Ascending aorta (tissue), 2 donors: ENCODE measurements at regions of chr19 and their contacts with region 1.

Region 1: GRCh38 chr19:47514869-47515588 is at the start of gene NAPA:
- DNase-seq: peak; percentile 100
- H3K4me3 ChIP-seq: peak within 1 kb of the TSS; percentile 84 to 85
- H3K27ac ChIP-seq: peak within 1 kb of the TSS; percentile 92 to 96
- H3K4me1 ChIP-seq: peaks cover 21 to 38% of the 10 kb centered on the region in 2 donors
- H3K27me3 ChIP-seq: no peaks in the 10 kb centered on the region
- CTCF ChIP-seq: no peak
- total RNA-seq, gene NAPA: 102 TPM

Region 2: DNA sequence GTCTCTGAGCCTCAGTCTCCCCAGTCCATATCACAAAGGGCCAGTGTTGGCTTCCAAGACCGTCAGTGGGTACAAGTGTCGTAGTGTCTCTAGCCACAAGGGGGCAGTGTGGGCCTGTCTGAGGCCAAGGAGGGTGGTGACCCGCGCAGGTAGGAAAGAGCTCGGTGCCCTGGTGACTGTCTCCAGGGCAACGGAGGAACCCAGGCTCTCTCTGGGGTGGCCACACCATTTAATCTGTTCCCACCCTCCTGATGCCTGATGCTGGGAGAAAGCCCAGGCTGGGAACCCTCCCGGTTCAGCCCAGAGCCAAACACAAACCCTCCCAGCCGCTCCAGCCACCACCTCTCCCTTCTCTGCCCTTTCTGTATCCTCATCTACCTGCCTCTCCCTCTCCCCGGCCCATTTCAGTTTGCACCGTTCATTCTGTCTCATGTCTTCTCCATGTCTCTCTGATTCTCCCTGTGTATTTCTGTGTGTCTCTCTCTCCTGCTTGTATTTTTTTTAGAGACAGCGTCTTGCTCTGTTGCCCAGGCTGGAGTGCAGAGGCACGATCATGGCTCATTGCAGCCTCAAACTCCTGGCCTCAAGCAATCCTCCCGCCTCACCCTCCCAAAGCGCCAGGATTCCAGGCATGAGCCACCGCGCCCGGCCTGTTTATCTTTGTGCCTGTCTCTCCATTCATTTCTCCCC is 78.2 kb before region 1 on chr19:
- intact Hi-C with region 1: loop called (anchors 1 kb)
- DNase-seq: peak in 1 of 2 donors; percentile 86
- H3K4me3 ChIP-seq: no peak overlapping the region
- H3K27ac ChIP-seq: no peak overlapping the region
- H3K4me1 ChIP-seq: no peaks in the 10 kb centered on the region
- H3K27me3 ChIP-seq: peaks cover 5% of the 10 kb centered on the region
- CTCF ChIP-seq: peak; percentile 81 to 92 (median 92)

Region 3: GRCh38 chr19:47483800-47484690 is 31.0 kb before region 1 on chr19 and contains the start of gene KPTN:
- intact Hi-C with region 1: loop called (anchors 1 kb)
- DNase-seq: peak; percentile 49 to 93
- H3K4me3 ChIP-seq: peak within 1 kb of the TSS; percentile 70 to 75
- H3K27ac ChIP-seq: peak within 1 kb of the TSS; percentile 86 to 93
- H3K4me1 ChIP-seq: peaks cover 0 to 8% of the 10 kb centered on the region in 2 donors
- H3K27me3 ChIP-seq: no peaks in the 10 kb centered on the region
- CTCF ChIP-seq: peak; percentile 82 to 97 (median 87)
- total RNA-seq, gene KPTN: 26.0 TPM

Region 4: DNA sequence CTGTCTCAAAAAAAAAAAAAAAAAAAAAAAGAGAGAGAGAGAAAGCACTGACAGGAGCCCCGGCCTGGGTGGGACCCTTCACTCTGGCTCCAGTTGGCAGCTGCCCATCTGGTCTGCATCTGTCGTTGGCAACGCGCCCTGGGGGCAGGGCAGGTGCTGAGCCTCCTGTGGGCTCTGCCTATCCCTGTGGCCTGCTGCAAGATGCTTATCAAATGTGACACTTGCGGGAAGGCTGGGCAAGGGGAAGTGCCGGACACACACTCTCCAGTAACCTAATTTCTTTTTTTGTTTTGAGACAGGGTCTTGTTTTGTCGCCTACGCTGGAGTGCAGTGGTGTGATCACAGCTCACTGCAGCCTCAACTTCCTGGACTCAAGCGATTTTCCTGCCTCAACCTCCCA is 20.3 kb before region 1 on chr19:
- intact Hi-C with region 1: no loop called
- DNase-seq: no peak
- H3K4me3 ChIP-seq: no peak overlapping the region
- H3K27ac ChIP-seq: no peak overlapping the region
- H3K4me1 ChIP-seq: no peaks in the 10 kb centered on the region
- H3K27me3 ChIP-seq: no peaks in the 10 kb centered on the region
- CTCF ChIP-seq: no peak

Region 5: DNA sequence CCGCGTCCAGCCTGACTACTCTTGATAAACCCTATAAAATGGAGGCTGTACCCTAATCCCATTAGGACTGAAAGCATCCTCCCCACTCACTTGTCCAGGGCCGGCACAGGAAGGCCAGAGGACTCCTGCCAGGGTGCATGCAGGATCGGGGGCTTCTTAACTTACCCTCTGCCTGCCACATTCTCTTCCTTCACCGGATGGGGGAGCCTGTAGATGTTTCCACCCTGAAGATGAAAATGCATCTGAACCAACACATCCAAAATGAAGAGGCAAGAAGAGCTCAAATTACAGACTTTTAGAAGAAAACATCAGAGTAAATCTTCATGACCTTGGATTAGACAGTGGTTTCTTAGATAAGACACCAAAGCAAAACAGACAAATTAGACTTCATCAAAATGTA is 25.7 kb after region 1 on chr19:
- intact Hi-C with region 1: no loop called
- DNase-seq: no peak
- H3K4me3 ChIP-seq: no peak overlapping the region
- H3K27ac ChIP-seq: no peak overlapping the region
- H3K4me1 ChIP-seq: peaks cover 4 to 5% of the 10 kb centered on the region in 2 donors
- H3K27me3 ChIP-seq: no peaks in the 10 kb centered on the region
- CTCF ChIP-seq: peak in 1 of 3 experiments; percentile 22

Region 6: GRCh38 chr19:47600246-47601179 is 85.5 kb after region 1 on chr19:
- intact Hi-C with region 1: loop called (anchors 1 kb)
- DNase-seq: peak; percentile 99 to 100
- H3K4me3 ChIP-seq: peak overlapping the region; percentile 55 to 69
- H3K27ac ChIP-seq: peak overlapping the region; percentile 74 to 84
- H3K4me1 ChIP-seq: peaks cover 0 to 13% of the 10 kb centered on the region in 2 donors
- H3K27me3 ChIP-seq: no peaks in the 10 kb centered on the region
- CTCF ChIP-seq: no peak

Region 7: GRCh38 chr19:47608074-47608918 is 93.3 kb after region 1 on chr19:
- intact Hi-C with region 1: loop called (anchors 1 kb)
- DNase-seq: peak; percentile 65 to 96
- H3K4me3 ChIP-seq: peak overlapping the region; percentile 84 to 97
- H3K27ac ChIP-seq: peak overlapping the region; percentile 94 to 97
- H3K4me1 ChIP-seq: peaks cover 9 to 38% of the 10 kb centered on the region in 2 donors
- H3K27me3 ChIP-seq: no peaks in the 10 kb centered on the region
- CTCF ChIP-seq: peak; percentile 22 to 55 (median 25)

Region 8: DNA sequence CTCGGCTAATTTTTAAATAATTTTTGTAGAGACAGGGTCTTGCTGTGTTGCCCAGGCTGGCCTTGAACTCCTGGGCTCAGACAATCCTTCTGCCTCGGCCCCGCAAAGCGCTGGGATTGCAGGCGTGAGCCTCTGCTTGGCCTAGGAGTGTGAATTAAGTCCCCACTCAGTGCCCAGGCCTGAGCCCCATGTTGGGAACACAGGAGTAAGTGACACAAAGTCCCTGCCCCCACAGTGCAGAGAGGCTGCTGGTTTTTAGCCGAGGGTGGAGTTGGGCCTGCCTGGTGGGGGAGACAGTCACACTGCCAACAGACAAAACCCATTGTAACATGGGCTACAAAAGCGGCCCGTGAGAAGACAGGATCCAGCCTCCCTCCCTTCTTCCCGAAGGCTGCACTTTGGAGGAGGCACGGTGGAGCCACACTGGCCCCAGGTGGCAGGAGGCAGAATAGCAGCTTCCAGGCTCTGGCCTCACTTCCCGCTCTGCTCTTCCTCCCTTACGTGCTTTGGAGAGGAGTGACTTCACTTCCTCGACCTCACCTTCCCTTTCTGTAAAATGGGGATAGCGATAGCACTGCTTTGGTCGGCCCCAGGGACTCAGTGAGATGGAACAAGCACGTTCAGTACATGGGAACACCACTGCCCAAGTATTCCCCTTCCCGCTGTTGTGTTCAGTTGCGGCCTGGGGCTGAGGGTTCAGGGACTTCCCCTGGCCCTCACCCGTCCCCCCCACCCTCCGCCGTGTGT is 183.0 kb after region 1 on chr19:
- intact Hi-C with region 1: loop called (anchors 2 kb)
- DNase-seq: peak in 1 of 2 donors; percentile 80
- H3K4me3 ChIP-seq: no peak overlapping the region
- H3K27ac ChIP-seq: no peak overlapping the region
- H3K4me1 ChIP-seq: no peaks in the 10 kb centered on the region
- H3K27me3 ChIP-seq: no peaks in the 10 kb centered on the region
- CTCF ChIP-seq: peak; percentile 95 to 99 (median 98)